Activated naive CD4-positive, alpha-beta T cell treated with anti-CD3 and anti-CD28 coated beads for 36 hours (primary cell): ENCODE measurements at regions of chr18 and their contacts with region 1.

Region 1: GRCh38 chr18:59220784-59221765 is 1.1 kb downstream of the GRP start:
- DNase-seq: no peak
- H3K4me3 Mint-ChIP-seq: peak overlapping the region; percentile 7
- H3K27ac Mint-ChIP-seq: no peak overlapping the region
- H3K4me1 Mint-ChIP-seq: peaks cover 15% of the 10 kb centered on the region
- H3K27me3 Mint-ChIP-seq: peaks cover 58% of the 10 kb centered on the region

Region 2: DNA sequence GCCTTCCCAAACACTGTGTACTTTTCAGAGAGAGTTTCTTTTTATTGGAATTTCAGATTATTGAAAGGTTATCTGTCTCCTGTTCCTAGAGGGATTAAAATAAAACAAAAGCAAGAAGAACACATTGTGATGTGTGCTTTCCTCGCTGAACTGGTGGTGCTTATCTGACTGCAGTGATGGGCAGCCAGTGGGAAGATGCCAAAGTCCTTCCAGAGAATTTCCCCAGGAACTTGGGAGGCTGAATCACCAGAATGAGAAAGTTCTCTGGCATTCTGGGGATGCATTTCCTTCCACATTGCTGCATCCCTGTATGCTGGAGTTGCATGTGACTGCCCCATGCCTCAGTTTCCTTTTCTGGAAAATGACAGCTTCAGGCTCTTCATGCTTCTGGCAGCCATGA is 135.3 kb before region 1 on chr18:
- CTCF ChIA-PET with region 1: interaction called, 3 read pairs
- intact Hi-C with region 1: loop called (anchors 2 kb)
- DNase-seq: no peak
- H3K4me3 Mint-ChIP-seq: no peak overlapping the region
- H3K27ac Mint-ChIP-seq: no peak overlapping the region
- H3K4me1 Mint-ChIP-seq: peaks cover 12% of the 10 kb centered on the region
- H3K27me3 Mint-ChIP-seq: peaks cover 23% of the 10 kb centered on the region

Region 3: GRCh38 chr18:59180150-59180845 is 40.8 kb before region 1 on chr18:
- CTCF ChIA-PET with region 1: no interaction called
- intact Hi-C with region 1: no loop called
- DNase-seq: no peak
- H3K4me3 Mint-ChIP-seq: no peak overlapping the region
- H3K27ac Mint-ChIP-seq: no peak overlapping the region
- H3K4me1 Mint-ChIP-seq: no peaks in the 10 kb centered on the region
- H3K27me3 Mint-ChIP-seq: peaks cover 12% of the 10 kb centered on the region